Thyroid gland (tissue), 4 donors: ENCODE measurements at regions of chr13 and their contacts with region 1.

Region 1: GRCh38 chr13:78759704-78760103 is 100.7 kb upstream of the OBI1 start:
- DNase-seq: no peak
- H3K4me3 ChIP-seq: no peak overlapping the region
- H3K27ac ChIP-seq: no peak overlapping the region
- H3K4me1 ChIP-seq: no peaks in the 10 kb centered on the region
- H3K27me3 ChIP-seq: no peaks in the 10 kb centered on the region
- CTCF ChIP-seq: no peak
- POLR2A ChIP-seq: no peak

Region 2: DNA sequence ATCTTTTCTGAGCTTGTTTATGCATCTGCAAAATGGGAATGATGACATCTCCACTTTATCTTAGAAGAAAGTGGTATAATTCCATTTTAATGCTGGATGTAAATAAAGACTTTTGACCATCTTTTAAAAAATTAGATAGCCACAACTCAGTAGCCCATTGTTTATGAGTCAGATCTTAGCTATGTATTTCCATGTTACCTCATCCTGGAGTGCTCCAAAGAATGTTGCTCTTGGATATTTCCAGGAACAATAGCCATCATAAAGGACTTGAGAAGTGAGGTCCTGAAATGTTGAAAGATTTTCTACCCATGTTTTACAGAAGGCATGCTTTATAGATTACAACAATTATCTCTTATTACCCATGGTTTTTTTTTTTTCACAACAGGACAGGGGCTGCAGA is 611.8 kb before region 1 on chr13:
- intact Hi-C with region 1: loop called (anchors 10 kb)
- DNase-seq: no peak
- H3K4me3 ChIP-seq: no peak overlapping the region
- H3K27ac ChIP-seq: no peak overlapping the region
- H3K4me1 ChIP-seq: no peaks in the 10 kb centered on the region
- H3K27me3 ChIP-seq: no peaks in the 10 kb centered on the region
- CTCF ChIP-seq: no peak
- POLR2A ChIP-seq: no peak